ENCODE measurements at regions of chr2 and their contacts with region 1.

Region 1: DNA sequence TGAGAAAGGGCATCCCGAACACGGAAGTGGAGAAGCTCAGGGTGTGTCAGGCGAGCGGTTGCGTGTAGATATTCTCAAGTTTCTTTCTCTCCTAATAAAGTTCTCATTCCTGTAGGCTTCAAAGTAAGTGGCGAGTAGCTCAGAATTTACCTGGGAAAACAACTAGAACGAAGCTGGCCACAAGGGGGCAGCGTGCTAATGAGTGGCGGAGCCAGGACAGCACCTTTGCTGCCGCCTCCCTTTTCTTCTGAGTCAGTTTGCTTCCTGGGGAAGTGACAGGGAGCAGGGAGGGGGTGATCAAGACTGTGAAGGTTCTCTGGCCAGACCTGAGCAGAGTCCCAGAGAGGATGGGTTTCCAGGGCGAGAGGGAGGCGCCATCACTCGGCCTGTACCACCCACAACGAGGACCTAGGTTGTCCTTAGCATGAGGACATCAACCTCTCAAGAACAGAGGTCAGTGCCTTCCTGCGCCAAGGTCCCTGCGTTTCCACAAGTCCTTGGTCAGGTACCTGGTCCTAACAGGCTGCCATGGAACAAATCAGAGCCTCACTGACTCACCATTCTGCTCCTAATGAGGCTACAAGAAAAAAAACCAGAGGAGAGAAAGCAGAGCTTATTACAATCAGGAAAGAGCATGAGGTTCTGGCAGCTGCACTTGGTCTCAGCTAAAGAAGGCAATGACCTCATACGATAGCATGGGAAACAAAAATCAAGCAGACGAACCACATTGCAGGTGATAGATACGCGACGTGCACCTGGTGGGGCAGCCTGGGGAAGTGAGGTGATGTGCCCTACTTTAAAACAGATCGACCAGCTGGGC is 98.6 kb downstream of the PLB1 start:
- DNase-seq: peak; percentile 85
- CTCF ChIP-seq: peak; percentile 86

Region 2: GRCh38 chr2:28558158-28558820 is 36.2 kb before region 1 on chr2:
- CTCF ChIA-PET with region 1: no interaction called
- POLR2A ChIA-PET with region 1: no interaction called
- DNase-seq: no peak
- CTCF ChIP-seq: no peak

Region 3: DNA sequence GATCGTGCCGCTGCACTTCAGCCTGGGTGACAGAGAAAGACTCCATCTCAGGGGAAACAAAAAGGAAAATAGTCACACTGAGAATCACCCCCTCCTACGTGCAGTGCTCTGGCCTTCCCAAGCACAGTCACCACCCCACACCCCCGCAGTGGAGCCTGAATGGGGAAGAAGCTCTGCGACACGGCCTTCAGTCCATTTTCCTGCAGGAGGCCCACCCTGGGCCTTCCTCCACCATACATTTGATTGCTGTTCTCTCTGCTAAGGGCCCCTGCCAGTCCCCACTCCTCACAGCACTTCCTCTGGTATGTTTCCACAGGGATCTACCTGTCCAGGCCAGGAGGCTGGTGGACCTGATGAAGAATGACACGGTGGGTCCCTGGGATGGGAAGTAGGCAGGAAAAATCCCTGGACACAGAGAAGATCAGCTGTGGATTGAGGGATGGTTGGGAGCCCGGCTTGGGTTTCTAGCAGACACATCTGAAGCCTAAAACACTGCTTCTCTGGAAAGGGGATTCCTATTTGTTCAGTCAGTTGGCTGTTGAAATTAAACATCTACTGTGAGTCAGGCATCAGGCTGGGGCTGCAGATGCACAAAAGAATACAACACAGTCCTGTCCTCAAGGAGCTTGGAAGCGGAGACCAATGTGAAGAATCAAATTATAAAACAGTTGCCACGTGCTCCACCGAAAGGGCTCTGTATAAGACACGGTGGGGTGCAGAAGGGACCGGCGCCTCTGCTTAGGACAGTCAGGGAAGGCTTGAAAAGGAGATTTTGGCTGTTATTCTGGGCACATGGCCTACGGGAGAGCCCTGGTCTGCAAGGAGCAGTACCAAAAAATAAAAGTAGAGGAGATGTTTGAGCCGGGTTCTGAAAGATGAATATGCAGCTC is 16.5 kb before region 1 on chr2:
- CTCF ChIA-PET with region 1: interaction called, 37 read pairs
- POLR2A ChIA-PET with region 1: no interaction called
- DNase-seq: no peak
- CTCF ChIP-seq: no peak

Region 4: GRCh38 chr2:28610583-28611201 is 16.2 kb after region 1 on chr2:
- CTCF ChIA-PET with region 1: interaction called, 126 read pairs
- POLR2A ChIA-PET with region 1: no interaction called
- DNase-seq: peak; percentile 53
- CTCF ChIP-seq: no peak

Region 5: DNA sequence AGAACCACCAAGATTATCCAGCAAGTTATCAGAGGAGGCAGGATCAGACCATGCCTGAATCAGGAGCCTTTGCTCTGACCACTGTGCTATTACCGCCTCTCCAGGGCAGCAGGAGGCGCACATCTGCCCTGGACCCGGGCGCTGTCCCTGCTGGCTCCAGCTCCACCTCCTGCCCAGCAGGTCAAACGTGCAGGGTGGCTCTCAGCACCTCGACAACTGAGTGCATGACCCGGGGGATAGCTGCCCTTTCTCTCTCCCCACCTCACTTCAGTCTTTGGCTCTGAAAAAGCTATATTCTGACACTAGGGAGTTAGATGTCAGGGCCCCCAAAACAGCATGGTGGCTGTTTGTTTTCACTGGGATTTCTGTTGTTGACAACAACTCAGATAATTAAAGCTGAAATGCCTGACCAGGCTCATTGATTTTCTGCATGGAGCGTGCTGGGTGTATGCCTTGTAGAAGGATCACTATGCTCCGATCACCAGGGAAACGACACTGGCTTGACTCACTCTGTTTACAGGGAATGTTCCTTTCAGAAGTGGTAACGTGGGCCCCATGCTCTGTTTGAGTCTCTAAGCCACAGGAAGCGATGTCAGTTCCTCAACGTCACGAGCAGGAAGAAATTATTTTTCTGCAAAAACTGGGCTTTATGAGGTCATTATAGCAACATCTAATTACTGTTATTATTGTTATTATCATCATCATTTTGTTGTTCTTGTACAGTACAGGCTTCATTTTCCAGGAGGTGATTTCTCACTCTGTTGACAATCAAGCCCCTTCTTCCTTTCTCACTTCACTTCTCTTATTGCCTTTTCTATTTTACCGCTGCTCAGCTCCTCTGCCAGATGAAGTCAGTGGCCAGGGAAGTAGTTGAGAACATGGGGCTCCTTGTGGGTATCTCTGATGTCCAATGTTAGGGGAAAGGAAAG is 26.9 kb after region 1 on chr2:
- CTCF ChIA-PET with region 1: interaction called, 27 read pairs
- POLR2A ChIA-PET with region 1: no interaction called
- DNase-seq: no peak
- CTCF ChIP-seq: peak; percentile 27

Region 6: DNA sequence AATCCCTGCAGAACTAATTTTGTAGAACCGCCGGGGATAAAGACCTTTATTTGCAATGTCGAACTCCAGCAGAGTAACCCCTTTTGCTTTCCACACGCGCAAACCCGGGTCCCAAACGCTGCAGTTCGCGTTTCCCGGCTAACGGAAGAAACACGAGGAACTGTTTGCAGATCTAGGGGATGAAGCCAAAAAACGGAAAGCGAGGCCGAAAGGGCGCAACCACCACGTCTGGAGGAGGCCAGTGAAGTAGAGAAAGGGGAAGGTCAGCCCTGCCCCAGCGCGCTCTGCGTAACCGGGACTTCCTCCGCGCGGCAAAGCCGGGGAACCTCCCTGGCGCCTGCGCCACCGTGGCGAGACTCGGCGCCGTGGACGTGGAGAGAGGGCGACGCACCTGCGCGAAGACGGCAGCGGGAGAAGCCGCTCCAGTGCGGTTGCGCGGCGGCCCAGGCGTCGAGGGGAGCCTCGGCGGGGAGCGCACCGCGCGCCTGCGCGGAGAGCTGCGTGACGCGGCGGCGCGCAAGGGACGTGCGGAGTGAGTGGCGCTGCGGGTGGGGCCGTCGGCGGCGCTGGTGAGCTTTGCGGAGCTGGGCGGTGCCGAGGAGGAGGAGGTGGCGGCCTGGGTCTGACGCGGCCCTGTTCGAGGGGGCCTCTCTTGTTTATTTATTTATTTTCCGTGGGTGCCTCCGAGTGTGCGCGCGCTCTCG is 156.9 kb after region 1 on chr2 and contains the start of gene PPP1CB:
- CTCF ChIA-PET with region 1: interaction called, 37 read pairs
- POLR2A ChIA-PET with region 1: interaction called, 3 read pairs
- DNase-seq: peak; percentile 94
- CTCF ChIP-seq: peak; percentile 41

Region 7: DNA sequence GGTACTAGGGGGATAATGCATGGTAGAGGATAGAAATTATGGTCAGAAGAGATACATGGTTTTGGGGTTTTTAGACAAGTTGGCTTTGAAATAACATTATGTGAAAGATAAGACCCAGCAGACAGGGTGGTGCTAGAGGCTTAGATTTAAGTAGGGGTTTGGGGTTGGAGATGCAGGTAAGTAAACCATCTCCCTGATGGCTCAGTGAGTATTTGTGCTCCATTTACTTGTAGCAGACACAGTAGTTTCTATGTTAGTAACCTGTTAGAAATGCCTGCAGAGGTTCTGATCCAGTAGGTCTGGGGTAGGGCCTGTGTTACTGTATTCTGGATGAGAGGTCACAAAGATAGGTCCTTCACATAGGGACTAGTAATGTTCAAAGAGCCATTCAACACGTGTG is 313.7 kb after region 1 on chr2:
- CTCF ChIA-PET with region 1: no interaction called
- POLR2A ChIA-PET with region 1: no interaction called
- DNase-seq: no peak
- CTCF ChIP-seq: no peak